Endothelial cell of umbilical vein (primary cell): ENCODE measurements at regions of chr4 and their contacts with region 1.

Region 1: GRCh38 chr4:158671915-158672806 is at the start of gene ETFDH:
- DNase-seq: peak; percentile 100
- H3K4me3 ChIP-seq: peak within 1 kb of the TSS; percentile 83 to 92 (median 84)
- H3K27ac ChIP-seq: peak within 1 kb of the TSS; percentile 71
- H3K4me1 ChIP-seq: peaks cover 11% of the 10 kb centered on the region
- H3K27me3 ChIP-seq: no peaks in the 10 kb centered on the region
- CTCF ChIP-seq: peak; percentile 75 to 80
- POLR2A ChIP-seq: no peak
- total RNA-seq, gene ETFDH: 21.8 and 22.3 TPM in 2 replicates

Region 2: DNA sequence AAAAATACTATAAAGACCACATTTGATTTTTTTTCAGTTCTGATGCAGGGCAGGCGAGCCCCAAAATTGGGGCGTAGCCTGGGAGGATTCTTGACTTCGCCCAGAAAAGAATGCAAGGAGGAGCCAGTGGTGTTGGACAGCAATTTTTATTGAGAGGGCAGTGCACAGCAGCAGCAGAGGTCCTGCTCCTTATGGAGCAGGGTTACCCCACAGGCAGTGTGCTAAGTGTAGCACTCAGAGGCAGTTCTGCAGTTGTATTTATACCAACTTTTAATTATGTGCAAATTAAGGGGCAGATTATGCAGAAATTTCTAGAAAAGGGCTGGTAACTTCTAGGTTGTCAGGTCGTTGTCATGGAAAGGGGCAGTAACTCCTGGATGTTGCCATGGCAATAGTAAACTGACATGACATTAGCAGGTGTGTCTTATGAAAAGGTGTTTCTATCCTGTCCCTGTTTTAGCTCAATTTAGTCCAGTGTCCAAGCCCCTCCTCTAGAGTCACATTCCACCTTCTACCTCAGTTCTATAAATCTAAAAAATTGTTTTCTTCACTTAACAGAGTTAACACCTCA is 569.2 kb before region 1 on chr4:
- CTCF ChIA-PET with region 1: no interaction called
- POLR2A ChIA-PET with region 1: no interaction called
- dilution Hi-C with region 1: no loop called
- intact Hi-C with region 1: no loop called
- DNase-seq: no peak
- H3K4me3 ChIP-seq: no peak overlapping the region
- H3K27ac ChIP-seq: no peak overlapping the region
- H3K4me1 ChIP-seq: no peaks in the 10 kb centered on the region
- H3K27me3 ChIP-seq: no peaks in the 10 kb centered on the region
- CTCF ChIP-seq: no peak
- POLR2A ChIP-seq: no peak

Region 3: DNA sequence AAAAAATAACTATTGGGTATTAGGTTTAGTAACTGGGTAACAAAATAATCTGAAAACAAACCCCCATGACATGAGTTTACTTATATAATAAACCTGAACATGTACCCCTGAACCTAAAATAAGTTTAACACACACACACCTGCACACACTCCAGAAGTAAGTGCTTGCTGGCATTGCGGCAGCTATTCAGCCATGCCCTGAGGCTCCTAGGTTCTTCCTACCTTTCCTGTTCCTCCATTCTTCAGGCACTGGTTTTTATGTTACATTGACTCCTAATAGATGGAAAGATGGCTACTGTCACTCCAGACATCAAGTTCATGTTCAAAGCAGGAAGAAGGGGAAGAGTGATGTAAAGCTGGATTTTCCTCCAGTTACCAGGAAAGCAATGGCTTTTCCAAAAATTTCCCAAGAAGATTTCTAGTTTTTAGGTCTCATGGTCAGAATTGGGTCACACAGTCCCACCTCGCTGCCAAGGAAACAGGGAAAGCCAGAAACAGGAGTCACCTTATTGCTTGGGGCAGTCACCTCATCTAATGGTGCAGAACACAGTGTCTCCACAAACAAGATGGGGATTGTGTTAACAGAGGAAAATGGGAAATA is 129.1 kb before region 1 on chr4:
- CTCF ChIA-PET with region 1: no interaction called
- POLR2A ChIA-PET with region 1: no interaction called
- dilution Hi-C with region 1: no loop called
- intact Hi-C with region 1: loop called (anchors 1 kb)
- DNase-seq: no peak
- H3K4me3 ChIP-seq: no peak overlapping the region
- H3K27ac ChIP-seq: peak overlapping the region; percentile 70
- H3K4me1 ChIP-seq: peaks cover 15% of the 10 kb centered on the region
- H3K27me3 ChIP-seq: no peaks in the 10 kb centered on the region
- CTCF ChIP-seq: no peak
- POLR2A ChIP-seq: no peak

Region 4: DNA sequence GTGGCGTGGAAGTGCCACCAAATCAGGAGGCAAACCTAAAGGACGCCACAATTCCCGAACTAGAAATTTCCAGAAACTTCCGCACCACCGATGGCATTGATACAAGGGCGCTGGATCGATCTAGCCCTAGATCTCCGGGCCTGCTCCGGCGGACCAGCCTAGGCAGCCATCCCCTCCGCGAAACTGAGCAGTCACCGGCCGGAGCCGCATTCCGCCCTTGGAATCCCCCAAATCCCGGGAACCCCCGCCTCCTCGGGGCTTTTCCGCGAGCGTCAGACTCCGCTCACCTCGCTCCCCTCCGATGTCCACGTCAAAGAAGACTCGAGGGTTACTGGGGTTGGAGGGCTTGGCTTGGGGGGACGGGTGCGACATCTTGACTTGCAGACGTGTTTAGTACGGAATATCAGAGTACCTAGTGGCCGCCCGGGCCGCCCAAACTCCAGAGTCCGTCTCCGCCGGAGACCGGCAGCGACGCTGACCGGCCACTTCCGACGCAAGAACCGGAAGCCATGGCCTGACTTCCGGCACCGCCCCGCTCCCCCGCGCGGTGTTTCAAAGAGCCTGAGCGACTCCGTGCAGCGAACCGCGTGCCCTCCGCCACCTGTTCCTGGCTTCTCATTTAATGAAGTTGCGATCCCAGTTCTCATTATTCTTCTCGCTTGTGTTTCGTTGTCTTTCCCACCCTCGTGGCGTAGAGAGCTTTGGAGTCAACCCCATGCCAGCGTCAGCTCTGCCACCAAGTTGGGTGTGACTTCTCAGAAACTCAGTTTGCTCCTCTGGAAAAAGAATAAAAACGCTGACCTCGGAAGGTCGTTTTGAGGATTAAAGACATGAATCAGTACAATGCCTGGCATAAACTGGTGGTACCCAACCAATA is 51.0 kb after region 1 on chr4 and contains the start of gene PPID:
- CTCF ChIA-PET with region 1: no interaction called
- POLR2A ChIA-PET with region 1: no interaction called
- dilution Hi-C with region 1: no loop called
- intact Hi-C with region 1: loop called (anchors 1 kb)
- DNase-seq: peak; percentile 80
- H3K4me3 ChIP-seq: peak within 1 kb of the TSS; percentile 67 to 87 (median 76)
- H3K27ac ChIP-seq: peak within 1 kb of the TSS; percentile 68
- H3K4me1 ChIP-seq: peaks cover 8% of the 10 kb centered on the region
- H3K27me3 ChIP-seq: no peaks in the 10 kb centered on the region
- CTCF ChIP-seq: no peak
- POLR2A ChIP-seq: peak; percentile 93
- total RNA-seq, gene PPID: 24.7 and 25.7 TPM in 2 replicates

Region 5: DNA sequence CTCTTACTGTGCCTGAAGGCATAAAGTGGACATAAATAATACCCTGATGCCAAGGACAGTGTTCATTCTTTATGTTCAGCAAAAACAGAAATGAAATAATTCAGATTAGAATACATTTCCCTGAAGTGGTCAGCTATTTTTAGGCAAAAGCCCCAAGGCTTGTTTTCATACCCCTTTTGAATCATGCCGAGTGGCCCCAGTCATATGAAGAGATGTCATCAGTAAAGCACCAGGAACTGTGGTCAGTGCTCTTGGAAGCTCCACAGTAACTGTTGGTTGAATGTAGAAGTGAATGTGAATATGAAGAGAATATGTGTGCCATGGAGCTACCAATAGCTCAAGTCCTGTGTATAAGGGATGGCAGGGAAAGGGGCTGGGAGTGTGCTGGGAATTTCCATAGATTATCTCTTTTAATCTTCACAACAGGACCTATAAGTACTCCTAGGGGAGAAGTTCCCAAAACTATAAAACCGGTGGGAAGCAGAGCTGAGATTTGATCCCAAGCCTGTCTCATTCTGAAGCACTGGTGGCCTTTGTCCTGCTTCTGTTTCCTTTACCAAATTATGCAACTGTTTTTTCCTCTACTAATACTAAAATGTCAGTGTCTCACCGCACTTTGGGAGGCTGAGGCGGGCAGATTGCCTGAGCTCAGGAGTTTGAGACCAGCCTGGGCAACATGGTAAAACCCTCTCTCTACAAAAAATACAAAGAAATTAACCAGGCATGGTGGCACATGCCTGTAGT is 149.2 kb after region 1 on chr4:
- CTCF ChIA-PET with region 1: no interaction called
- POLR2A ChIA-PET with region 1: no interaction called
- dilution Hi-C with region 1: no loop called
- intact Hi-C with region 1: loop called (anchors 5 kb)
- DNase-seq: no peak
- H3K4me3 ChIP-seq: no peak overlapping the region
- H3K27ac ChIP-seq: no peak overlapping the region
- H3K4me1 ChIP-seq: peaks cover 45% of the 10 kb centered on the region
- H3K27me3 ChIP-seq: no peaks in the 10 kb centered on the region
- CTCF ChIP-seq: no peak
- POLR2A ChIP-seq: no peak

Region 6: DNA sequence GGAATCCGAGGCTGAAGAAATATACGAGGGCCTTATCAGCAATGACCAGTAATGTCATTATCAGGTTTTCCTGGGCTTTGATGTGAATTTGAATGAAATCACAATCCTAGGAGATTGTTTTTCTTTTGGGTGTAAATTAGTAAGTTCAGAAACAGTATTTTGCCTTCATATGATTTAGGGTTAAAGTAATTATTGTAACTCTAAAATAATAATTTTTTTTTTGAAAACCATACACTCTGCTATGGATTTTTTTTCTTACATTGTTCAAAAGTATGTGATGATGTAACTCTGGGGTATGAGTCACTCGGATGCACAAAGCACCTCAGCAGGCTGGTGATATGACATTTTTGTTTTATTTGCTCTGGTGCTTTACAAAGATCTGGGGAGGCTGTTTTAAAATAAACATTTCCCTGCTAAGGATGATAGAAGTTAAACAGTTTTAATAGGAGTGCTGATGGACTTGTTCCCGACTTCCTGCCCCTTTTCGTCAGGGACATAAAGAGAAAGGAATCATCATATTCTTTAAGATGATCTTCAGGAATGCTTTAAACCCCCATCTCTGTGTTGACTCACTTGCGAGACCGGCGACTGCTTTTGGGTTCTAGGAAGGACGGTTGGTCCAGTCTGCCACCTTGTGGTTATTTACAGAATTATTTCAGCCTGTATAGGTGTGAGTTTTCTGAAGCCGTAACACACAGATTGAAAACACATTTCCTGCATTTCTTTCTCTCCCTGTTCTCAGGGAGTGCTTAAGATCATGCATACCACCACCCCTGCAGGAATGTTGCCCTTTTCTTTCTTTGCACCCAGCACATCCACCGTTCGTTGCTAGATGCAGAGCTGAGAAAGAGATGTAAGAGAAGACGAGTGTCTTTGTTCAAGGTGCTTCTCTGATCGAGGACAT is 503.2 kb after region 1 on chr4:
- CTCF ChIA-PET with region 1: interaction called, 3 read pairs
- POLR2A ChIA-PET with region 1: no interaction called
- dilution Hi-C with region 1: no loop called
- intact Hi-C with region 1: loop called (anchors 5 kb)
- DNase-seq: peak; percentile 93
- H3K4me3 ChIP-seq: peak overlapping the region in 1 of 3 experiments; percentile 72
- H3K27ac ChIP-seq: peak overlapping the region; percentile 63
- H3K4me1 ChIP-seq: peaks cover 42% of the 10 kb centered on the region
- H3K27me3 ChIP-seq: no peaks in the 10 kb centered on the region
- CTCF ChIP-seq: peak; percentile 60 to 62
- POLR2A ChIP-seq: peak; percentile 27

Region 7: DNA sequence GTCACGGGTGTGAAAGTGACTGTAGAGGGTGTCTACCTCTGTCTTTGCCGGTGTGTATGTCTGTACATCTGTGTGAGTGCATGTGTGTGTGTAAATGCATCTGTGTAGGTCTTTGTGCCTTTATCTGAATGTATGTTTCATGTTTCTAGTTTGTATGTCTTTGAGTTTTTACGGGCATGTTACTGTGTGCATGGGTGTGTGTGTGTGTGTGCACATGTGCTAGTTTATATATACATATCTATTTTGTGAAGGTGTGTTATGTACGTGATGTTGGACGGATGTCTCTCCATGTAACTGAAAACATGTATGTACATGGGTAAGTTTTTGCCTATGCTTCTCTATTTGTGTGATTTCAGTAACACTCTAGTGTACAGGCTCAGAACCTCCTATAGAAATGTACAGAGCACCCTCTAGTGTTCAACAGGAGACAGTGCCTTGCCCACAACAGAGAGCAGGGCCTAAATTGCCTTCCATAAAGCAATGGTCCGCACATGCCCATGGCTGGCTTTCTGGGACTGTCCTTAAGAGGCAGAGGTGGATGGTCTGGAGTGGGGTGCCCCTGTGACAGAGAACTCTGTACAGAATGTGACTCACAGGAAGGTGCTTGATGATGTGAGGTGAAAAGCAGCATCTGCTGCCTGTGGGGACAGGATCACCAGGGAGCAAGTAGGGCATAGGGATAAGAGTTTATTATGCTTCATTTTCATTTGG is 774.3 kb after region 1 on chr4:
- CTCF ChIA-PET with region 1: no interaction called
- POLR2A ChIA-PET with region 1: no interaction called
- dilution Hi-C with region 1: no loop called
- intact Hi-C with region 1: loop called (anchors 2 kb)
- DNase-seq: peak; percentile 76
- H3K4me3 ChIP-seq: no peak overlapping the region
- H3K27ac ChIP-seq: no peak overlapping the region
- H3K4me1 ChIP-seq: no peaks in the 10 kb centered on the region
- H3K27me3 ChIP-seq: no peaks in the 10 kb centered on the region
- CTCF ChIP-seq: peak; percentile 78 to 81
- POLR2A ChIP-seq: no peak